ENCODE measurements at regions of chr15 and their contacts with region 1.

Region 1: GRCh38 chr15:63881431-63881830 is 47.7 kb upstream of the HERC1 start:
- DNase-seq: no peak
- CTCF ChIP-seq: no peak

Region 2: GRCh38 chr15:63763476-63764123 is 117.8 kb before region 1 on chr15:
- in situ Hi-C with region 1: loop called (anchors 10 kb)
- DNase-seq: peak; percentile 32
- CTCF ChIP-seq: no peak

Measured in GM13976 (cell line).